PC-9 (cell line): ENCODE measurements at regions of chr7 and their contacts with region 1.

Region 1: DNA sequence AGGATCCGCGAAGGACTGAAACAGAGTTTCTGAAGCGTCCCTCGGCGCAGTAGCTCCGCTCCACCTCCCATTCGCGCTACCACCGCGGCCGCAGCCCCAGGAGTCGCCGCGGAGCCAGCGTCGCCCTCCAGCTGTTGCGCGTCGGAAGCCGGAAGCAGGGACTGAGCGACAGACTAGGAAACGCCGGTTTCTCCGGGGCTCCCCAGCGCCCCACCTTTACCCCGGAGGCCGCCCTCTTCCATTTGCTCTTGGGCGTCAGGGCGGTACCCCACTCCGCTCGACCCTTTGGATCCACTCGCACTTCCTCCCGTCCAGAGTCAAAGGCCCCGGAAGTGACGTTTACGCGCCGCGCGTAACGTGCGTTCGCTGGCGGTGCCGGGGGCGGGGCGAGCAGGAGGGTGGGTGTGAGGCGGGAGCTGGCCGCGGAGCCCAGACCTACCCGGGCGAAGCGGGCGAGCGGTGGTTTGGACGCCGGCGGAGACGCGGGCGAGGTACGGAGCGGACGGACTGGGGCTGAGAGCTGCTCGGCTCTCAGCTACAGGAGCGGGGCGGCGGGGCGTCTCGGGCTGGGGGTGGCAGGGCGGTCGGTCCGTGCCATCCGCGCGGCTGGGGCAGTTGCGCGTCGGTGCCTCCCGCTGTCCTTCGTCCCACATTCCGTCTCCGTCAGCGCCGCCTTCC is at the start of gene RABGEF1:
- DNase-seq: peak; percentile 93 to 98
- H3K4me3 ChIP-seq: peak within 1 kb of the TSS; percentile 71
- H3K27ac ChIP-seq: peak within 1 kb of the TSS; percentile 62
- H3K4me1 ChIP-seq: peaks cover 13% of the 10 kb centered on the region; the same call in 1 of the 2 replicates
- H3K27me3 ChIP-seq: no peaks in the 10 kb centered on the region
- CTCF ChIP-seq: no peak
- total RNA-seq, gene RABGEF1: 31.2 and 35.2 TPM in 2 replicates

Region 2: GRCh38 chr7:66558660-66559465 is 181.6 kb before region 1 on chr7:
- CTCF ChIA-PET with region 1: interaction called, 9 read pairs
- POLR2A ChIA-PET with region 1: interaction called, 17 read pairs
- intact Hi-C with region 1: no loop called
- DNase-seq: no peak
- H3K4me3 ChIP-seq: no peak overlapping the region
- H3K27ac ChIP-seq: no peak overlapping the region
- H3K4me1 ChIP-seq: no peaks in the 10 kb centered on the region
- H3K27me3 ChIP-seq: no peaks in the 10 kb centered on the region
- CTCF ChIP-seq: no peak

Region 3: DNA sequence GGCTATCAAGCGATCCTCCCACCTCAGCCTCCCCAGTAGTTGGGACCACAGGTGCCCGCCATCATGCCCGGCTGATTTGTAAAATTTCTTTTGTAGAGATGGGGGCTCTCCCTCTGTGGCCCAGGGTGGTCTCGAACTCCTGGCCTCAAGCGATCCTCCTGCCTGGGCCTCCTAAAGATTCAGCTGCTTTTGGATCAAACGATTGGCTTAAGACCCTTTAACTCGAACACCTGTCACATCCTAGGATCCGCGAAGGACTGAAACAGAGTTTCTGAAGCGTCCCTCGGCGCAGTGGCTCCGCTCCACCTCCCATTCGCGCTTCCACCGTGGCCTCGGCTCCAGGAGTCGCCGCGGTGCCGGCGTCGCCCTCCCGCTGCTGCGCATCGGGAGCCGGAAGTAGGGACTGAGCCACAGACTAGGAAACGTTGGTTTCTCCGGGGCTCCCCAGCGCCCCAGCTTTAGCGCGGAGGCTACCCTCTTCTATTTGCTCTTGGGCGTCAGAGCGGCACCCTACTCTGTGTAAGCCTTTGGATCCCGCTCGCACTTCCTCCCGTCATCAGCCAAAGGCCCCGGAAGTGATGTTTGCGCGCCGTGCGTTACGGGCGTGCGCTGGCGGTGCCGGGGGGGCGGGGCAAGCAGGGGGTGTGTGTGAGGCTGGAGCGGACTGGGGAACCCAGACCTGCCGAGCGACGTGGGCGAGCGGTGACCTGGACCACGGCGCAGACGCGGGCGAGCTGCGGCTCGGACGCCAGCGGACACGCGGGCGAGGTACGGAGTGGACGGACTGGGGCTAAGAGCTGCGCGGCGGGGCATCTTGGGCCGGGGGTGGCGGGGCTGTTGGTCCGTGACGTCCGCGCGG is 58.7 kb before region 1 on chr7:
- CTCF ChIA-PET with region 1: no interaction called
- POLR2A ChIA-PET with region 1: interaction called, 3 read pairs
- intact Hi-C with region 1: loop called (anchors 2 kb)
- DNase-seq: peak; percentile 91 to 96
- H3K4me3 ChIP-seq: peak overlapping the region; percentile 89
- H3K27ac ChIP-seq: peak overlapping the region; percentile 77
- H3K4me1 ChIP-seq: peaks cover 11% of the 10 kb centered on the region
- H3K27me3 ChIP-seq: no peaks in the 10 kb centered on the region
- CTCF ChIP-seq: no peak

Region 4: DNA sequence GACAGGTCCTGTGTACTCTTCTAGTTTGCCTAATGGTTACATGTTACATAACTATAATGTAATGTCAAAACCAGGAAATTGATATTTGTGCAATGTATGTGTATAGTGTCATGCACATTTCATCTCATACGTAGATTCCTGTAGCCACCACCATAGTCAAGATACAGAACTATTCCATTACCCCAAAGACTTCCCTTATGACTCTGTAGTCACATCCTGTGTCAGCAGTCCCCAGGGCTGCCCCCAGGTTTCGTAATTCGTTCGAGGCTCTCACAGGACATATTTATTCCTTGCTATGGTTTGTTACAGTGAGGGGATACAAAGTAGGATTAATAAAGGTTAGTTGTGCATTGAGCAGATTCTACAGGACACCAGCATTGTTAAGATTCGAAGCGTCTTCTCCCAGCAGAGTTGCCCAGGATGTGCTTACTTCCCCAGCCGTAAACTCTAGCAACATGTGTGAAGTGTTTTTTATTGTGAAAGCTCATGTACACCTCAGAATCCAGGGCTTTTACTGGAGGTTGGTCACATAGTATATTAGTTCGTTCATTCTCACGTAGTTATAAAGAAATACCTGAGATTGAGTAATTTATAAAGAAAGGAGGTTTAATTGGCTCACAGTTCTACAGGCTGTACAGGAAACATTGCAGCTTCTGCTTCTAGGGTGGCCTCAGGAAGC is 18.6 kb after region 1 on chr7:
- CTCF ChIA-PET with region 1: interaction called, 11 read pairs
- POLR2A ChIA-PET with region 1: no interaction called
- intact Hi-C with region 1: no loop called
- DNase-seq: no peak
- H3K4me3 ChIP-seq: no peak overlapping the region
- H3K27ac ChIP-seq: no peak overlapping the region
- H3K4me1 ChIP-seq: no peaks in the 10 kb centered on the region
- H3K27me3 ChIP-seq: no peaks in the 10 kb centered on the region
- CTCF ChIP-seq: no peak

Region 5: DNA sequence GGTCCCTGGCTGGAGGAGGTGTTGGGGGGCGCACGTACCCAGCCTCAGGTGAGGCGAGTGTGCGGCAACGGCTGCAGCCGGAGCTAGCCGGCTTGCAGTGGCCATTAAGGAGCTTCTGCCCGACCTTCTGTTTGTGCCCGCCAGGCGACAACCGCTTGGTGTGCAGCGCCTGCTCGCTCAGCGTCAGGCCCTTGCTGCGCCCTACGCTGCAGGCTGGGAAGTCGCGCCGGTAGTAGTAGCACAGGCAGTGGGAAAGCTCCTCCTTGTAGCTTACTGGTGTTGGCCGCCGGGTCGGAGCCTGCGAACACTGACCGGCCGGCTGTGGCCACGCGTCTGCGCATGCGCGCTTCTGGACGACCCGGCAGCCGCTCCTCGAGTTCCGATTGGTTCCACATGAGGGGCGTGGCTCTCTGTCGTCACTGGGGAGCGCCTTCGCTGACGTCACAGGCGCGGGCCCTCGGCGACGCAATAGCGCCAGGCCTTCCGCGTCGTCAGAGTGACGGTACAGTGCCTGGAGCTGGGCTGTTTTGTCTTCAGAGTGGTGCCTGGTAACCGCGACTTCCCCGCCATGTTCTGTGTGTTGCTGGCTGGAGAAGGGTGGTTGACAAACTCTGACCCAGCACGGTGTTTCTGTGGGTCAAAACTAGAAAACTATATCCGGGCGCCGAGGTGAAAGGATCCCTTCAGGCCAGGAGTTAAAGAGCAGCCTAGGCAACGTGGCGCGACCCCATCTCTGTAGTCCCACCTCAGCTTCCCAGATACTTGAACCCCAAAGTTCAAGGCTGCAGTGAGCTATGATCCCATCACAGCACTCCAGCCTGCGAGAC is 104.3 kb after region 1 on chr7:
- CTCF ChIA-PET with region 1: no interaction called
- POLR2A ChIA-PET with region 1: interaction called, 27 read pairs
- intact Hi-C with region 1: no loop called
- DNase-seq: peak; percentile 92 to 99
- H3K4me3 ChIP-seq: peak overlapping the region; percentile 84
- H3K27ac ChIP-seq: peak overlapping the region; percentile 79
- H3K4me1 ChIP-seq: peaks cover 15% of the 10 kb centered on the region
- H3K27me3 ChIP-seq: no peaks in the 10 kb centered on the region
- CTCF ChIP-seq: peak; percentile 15; the same call in 1 of the 2 replicates